Ovary (tissue), 10 donors: ENCODE measurements at regions of chr16 and their contacts with region 1.

Region 1: DNA sequence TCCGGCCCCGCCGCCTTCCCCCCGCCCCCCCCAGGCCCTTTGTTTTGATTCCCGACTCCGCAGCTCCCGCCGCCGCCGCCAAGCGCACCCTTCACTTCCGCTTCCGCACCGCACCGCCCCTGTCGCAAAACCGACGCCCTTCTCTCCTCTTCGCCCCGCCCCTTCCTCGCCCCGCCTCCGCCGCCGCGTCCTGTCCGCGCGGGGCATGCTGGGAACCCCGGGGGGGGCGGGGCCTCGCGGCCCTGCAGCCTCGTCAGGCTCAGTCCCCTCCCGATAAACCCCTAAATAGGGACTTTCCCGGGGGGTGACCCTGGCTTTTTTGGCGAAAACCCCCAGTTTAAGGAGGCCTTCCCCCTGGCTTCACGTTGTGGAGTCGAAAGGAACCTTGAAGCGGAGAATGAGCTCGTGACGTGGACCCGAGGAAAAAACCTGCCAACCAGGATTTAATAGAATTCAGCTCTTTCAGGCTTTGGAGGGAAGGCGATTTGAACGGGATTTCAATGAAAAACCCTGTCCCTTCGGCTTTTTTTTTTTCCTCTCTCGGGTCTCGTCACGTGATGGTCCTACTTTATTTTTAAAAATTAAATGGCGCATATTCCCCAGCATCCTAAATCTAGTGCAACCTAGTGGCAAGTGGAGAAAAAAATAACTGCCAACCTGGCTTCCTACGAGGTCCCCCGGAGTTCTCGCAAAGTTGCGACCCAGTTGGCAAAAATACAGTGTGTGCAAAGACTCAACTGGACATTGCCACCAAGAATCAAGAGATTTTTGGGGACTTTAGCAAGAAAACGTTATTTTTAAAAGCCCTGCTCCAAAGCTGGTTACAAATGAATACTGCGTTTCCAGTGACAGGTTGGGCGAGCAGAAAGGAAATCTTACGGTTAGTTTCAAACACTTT is at the start of gene MARF1:
- DNase-seq: peak; percentile 99 to 100 (median 99)
- H3K4me3 ChIP-seq: peak within 1 kb of the TSS; percentile 83
- H3K27ac ChIP-seq: peak within 1 kb of the TSS; percentile 93 to 94
- H3K4me1 ChIP-seq: peaks cover 3% of the 10 kb centered on the region
- H3K27me3 ChIP-seq: no peaks in the 10 kb centered on the region
- CTCF ChIP-seq: peak; percentile 46
- EP300 ChIP-seq: no peak
- POLR2A ChIP-seq: peak; percentile 99
- total RNA-seq, gene MARF1: 23.1 to 95.7 (median 85.7) TPM

Region 2: DNA sequence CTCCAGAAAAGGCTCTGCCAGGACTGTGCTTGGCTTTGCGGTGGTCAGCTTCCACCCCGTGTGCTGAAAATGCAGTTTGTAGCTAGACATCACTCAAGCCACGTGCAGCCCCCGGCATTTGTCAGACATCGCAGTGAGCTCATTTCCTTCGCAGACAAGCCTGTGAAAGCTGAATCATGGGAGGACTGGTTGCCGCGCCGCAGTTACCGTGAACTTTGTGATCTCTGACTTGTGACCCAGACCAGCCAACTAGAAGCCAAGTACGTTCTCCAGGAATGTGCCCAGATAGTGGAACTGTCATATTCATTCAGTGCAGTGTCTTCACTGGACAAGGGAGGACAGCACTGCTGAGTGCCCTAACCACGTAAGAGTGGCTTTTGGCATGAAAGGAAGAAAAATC is 64.8 kb after region 1 on chr16:
- intact Hi-C with region 1: loop called in 1 of 4 experiments (anchors 5 kb)
- DNase-seq: no peak
- H3K4me3 ChIP-seq: no peak overlapping the region
- H3K27ac ChIP-seq: no peak overlapping the region
- H3K4me1 ChIP-seq: no peaks in the 10 kb centered on the region
- H3K27me3 ChIP-seq: no peaks in the 10 kb centered on the region
- CTCF ChIP-seq: no peak
- EP300 ChIP-seq: no peak
- POLR2A ChIP-seq: no peak